MCF 10A (cell line): ENCODE measurements at regions of chr10 and their contacts with region 1.

Region 1: DNA sequence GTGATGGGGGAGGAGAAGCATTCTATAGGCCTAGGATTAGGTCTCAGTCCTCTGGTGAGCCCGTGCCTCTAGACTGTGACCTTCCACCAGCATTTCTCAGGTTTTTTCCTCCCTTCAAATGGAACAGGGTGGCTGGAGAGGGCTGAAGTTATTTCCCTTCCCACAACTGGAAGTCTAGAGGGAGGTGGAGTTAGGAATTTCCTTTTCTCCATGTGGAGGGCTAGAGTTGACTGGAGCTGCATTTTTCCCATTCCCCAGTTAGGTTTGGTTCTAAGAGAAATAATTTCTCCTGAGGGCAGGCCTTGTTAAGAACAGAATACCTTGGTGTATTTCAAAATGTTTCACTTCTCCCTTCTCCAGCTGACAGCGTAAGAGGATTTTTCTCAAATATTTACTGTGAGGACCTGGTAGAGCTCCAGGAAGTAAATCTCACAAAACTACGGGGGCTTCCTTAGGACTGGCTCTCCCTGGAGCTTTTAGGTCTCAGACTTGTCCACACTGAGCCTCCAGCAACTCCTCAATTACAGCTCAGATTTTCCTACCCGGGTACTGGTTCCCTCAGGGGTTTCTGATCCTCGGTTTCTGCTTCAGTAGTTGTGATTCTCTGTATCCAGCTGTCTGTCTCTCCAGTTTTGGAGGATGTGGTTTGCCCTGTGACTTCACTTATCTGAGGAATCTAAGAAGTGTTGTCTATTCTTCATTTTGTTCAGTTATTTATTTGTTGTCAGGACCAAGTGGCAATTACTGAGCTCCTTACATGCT is 6.0 kb upstream of the REEP3 start:
- DNase-seq: peak; percentile 42
- H3K4me3 Mint-ChIP-seq: peak overlapping the region; percentile 65
- H3K27ac Mint-ChIP-seq: peak overlapping the region; percentile 97
- H3K4me1 Mint-ChIP-seq: peaks cover 59% of the 10 kb centered on the region
- H3K27me3 Mint-ChIP-seq: no peaks in the 10 kb centered on the region
- CTCF ChIP-seq: no peak

Region 2: DNA sequence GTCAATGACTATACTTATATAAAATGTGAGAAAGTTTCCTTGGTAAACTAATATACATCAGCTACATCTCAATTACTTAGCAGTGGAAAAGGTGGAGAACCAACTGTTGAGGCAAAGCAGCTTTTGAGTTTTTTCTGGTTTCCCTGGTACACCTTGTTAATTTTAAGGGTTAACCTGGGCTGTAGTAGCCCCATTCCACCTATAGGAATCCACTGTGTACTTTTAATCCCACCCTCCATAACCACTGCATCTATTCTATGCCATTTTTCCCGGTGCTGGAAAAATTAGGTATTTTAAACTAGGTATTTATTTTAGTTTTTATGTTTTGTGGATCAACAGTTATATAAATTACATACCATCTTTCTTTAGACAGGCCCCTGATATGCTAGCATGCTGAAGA is 339.6 kb before region 1 on chr10:
- CTCF ChIA-PET with region 1: no interaction called
- POLR2A ChIA-PET with region 1: no interaction called
- intact Hi-C with region 1: no loop called
- DNase-seq: no peak
- H3K4me3 Mint-ChIP-seq: no peak overlapping the region
- H3K27ac Mint-ChIP-seq: no peak overlapping the region
- H3K4me1 Mint-ChIP-seq: no peaks in the 10 kb centered on the region
- H3K27me3 Mint-ChIP-seq: no peaks in the 10 kb centered on the region
- CTCF ChIP-seq: no peak

Region 3: DNA sequence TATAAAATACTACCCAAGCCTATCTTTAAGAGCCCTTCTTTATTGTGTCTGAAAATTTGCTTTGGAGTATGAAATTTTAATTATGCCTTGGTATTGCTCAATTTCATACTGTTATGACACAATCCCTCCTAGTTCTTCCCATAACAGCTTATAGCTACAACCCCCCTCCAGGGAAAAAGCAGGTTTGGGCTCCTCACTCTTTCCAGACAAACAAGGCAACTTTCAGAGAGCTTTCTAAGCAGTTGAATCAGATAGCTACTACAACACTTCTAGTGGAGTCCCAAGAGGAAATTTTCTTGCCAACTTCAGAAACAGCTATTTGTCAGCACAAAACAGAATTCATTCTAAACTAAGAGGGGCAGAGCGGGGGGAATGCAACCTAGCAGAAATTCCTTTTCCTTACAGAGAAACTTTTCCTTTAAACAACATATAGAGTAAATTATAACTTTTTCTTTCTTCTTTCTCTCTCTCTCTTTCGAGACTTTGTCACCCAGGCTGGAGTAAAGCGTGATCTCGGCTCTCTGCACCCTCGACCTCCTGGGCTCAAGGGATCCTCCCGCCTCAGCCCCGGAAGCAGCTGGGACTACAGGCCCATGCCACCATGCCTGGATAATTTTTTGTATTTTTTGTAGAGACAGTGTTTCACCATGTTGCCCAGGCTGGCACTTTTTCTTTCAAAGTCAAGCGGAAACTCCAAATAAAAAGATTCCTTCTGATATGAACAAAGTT is 23.4 kb before region 1 on chr10:
- CTCF ChIA-PET with region 1: interaction called, 7 read pairs
- POLR2A ChIA-PET with region 1: interaction called, 89 read pairs
- intact Hi-C with region 1: no loop called
- DNase-seq: peak; percentile 91
- H3K4me3 Mint-ChIP-seq: peak overlapping the region; percentile 38
- H3K27ac Mint-ChIP-seq: peak overlapping the region; percentile 72
- H3K4me1 Mint-ChIP-seq: peaks cover 17% of the 10 kb centered on the region
- H3K27me3 Mint-ChIP-seq: no peaks in the 10 kb centered on the region
- CTCF ChIP-seq: no peak

Region 4: DNA sequence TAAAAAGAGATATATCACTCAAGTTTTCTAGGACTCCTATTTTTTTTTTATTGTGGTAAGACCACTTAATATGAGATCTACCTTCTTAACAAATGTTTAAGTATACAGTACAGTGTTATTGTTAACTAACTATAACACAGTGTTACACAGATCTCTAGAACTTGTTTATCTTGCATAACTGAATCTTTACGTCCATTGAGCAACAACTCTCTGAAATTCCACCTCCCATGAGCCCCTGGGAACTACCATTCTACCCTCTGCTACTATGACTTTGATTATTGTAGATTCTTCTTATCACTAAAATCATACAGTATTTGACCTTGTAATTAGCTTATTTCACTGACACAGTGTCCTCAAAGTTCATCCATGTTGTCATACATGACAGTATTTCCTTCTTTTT is 16.5 kb before region 1 on chr10:
- CTCF ChIA-PET with region 1: interaction called, 10 read pairs
- POLR2A ChIA-PET with region 1: interaction called, 89 read pairs
- intact Hi-C with region 1: no loop called
- DNase-seq: peak; percentile 28
- H3K4me3 Mint-ChIP-seq: no peak overlapping the region
- H3K27ac Mint-ChIP-seq: no peak overlapping the region
- H3K4me1 Mint-ChIP-seq: peaks cover 16% of the 10 kb centered on the region
- H3K27me3 Mint-ChIP-seq: no peaks in the 10 kb centered on the region
- CTCF ChIP-seq: no peak

Region 5: GRCh38 chr10:63504125-63504880 is 10.9 kb before region 1 on chr10:
- CTCF ChIA-PET with region 1: interaction called, 10 read pairs
- POLR2A ChIA-PET with region 1: interaction called, 83 read pairs
- intact Hi-C with region 1: no loop called
- DNase-seq: peak; percentile 67
- H3K4me3 Mint-ChIP-seq: peak overlapping the region; percentile 4
- H3K27ac Mint-ChIP-seq: peak overlapping the region; percentile 60
- H3K4me1 Mint-ChIP-seq: peaks cover 20% of the 10 kb centered on the region
- H3K27me3 Mint-ChIP-seq: no peaks in the 10 kb centered on the region
- CTCF ChIP-seq: no peak

Region 6: DNA sequence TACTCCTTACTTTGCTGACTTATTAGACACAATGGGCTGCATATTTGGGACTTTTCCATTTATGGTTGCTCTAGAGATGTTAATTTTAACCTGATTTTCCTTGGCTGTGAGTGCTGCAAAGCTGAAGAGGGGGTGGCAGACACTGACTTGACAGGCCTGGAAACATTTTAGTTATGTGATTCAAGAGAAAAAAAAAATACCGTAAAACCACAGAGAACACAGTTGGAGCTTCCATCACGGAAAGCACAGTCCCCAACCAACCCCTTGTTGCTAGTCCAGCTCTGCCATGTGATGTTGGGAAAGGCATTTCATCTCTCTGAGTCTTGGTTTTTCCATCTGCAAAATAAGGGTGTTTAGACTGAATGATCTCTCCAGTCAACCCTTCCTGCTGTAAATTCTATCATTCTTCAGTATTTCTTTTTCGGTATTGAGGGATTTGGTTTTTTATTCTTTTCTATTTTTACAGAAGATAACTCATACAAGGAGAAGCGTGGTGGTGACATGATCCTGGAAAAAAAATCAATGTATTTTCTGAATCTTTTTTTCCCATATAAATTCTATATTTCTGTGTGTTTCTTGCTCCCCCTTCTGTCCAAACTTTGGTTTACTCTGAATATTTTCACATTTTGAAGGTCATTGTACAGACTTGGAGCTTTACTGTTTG is 252.1 kb after region 1 on chr10:
- CTCF ChIA-PET with region 1: no interaction called
- POLR2A ChIA-PET with region 1: no interaction called
- intact Hi-C with region 1: no loop called
- DNase-seq: peak; percentile 29
- H3K4me3 Mint-ChIP-seq: no peak overlapping the region
- H3K27ac Mint-ChIP-seq: no peak overlapping the region
- H3K4me1 Mint-ChIP-seq: peaks cover 13% of the 10 kb centered on the region
- H3K27me3 Mint-ChIP-seq: peaks cover under 1% of the 10 kb centered on the region
- CTCF ChIP-seq: peak; percentile 39